ENCODE measurements at regions of chr12 and their contacts with region 1.

Region 1: GRCh38 chr12:7933255-7933729 is 2.7 kb downstream of the SLC2A3 start:
- DNase-seq: peak; percentile 88
- ATAC-seq: peak; percentile 77
- H3K4me3 Mint-ChIP-seq: no peak overlapping the region
- H3K27ac Mint-ChIP-seq: no peak overlapping the region
- H3K4me1 Mint-ChIP-seq: peaks cover 30% of the 10 kb centered on the region
- H3K27me3 Mint-ChIP-seq: no peaks in the 10 kb centered on the region

Region 2: DNA sequence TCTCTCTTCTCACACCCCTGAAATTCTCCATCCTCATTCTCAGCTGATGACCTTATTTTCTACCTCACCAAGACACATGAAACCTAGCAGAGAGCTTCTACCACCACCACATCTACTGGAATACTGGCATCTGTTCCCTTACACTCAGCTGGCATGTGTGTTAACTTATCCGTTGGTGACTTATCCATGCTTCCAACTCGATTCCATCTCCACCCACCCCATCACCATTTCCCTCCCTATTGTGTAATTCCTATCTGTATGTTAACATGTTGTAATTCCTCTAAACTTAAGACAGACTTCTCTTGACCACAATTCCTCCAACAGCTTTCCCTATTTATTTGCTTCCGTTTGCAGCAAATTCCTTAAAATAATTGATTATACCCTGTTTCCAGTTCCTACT is 857.4 kb before region 1 on chr12:
- CTCF ChIA-PET with region 1: no interaction called
- POLR2A ChIA-PET with region 1: no interaction called
- DNase-seq: no peak
- ATAC-seq: no peak
- H3K4me3 Mint-ChIP-seq: no peak overlapping the region
- H3K27ac Mint-ChIP-seq: no peak overlapping the region
- H3K4me1 Mint-ChIP-seq: peaks cover 6% of the 10 kb centered on the region
- H3K27me3 Mint-ChIP-seq: peaks cover 30% of the 10 kb centered on the region

Region 3: DNA sequence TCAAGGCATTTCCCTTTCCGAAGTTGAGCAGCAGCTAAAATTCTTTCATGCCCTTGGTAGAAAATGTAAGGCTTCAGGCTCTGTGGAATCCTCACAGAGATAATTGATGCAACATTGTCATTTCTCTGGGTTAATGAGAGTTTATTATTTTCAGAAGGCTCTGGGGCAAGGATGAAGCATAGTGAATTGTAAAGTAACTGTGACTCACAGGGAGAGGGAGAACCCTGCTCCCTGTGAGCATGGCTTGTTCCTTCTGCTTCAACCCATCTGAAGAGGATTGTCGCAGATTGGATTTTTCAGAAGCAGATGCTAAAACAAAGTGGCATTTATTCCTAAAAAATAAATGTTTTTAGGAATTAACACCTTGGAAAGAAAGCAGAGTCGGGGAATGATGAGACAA is 308.8 kb before region 1 on chr12:
- CTCF ChIA-PET with region 1: no interaction called
- POLR2A ChIA-PET with region 1: no interaction called
- DNase-seq: no peak
- ATAC-seq: no peak
- H3K4me3 Mint-ChIP-seq: no peak overlapping the region
- H3K27ac Mint-ChIP-seq: no peak overlapping the region
- H3K4me1 Mint-ChIP-seq: no peaks in the 10 kb centered on the region
- H3K27me3 Mint-ChIP-seq: peaks cover 4% of the 10 kb centered on the region

Region 4: GRCh38 chr12:7917392-7918267 is 15.7 kb before region 1 on chr12:
- CTCF ChIA-PET with region 1: interaction called, 24 read pairs
- POLR2A ChIA-PET with region 1: interaction called, 7 read pairs
- DNase-seq: no peak
- ATAC-seq: no peak
- H3K4me3 Mint-ChIP-seq: no peak overlapping the region
- H3K27ac Mint-ChIP-seq: no peak overlapping the region
- H3K4me1 Mint-ChIP-seq: peaks cover 37% of the 10 kb centered on the region
- H3K27me3 Mint-ChIP-seq: no peaks in the 10 kb centered on the region

Region 5: DNA sequence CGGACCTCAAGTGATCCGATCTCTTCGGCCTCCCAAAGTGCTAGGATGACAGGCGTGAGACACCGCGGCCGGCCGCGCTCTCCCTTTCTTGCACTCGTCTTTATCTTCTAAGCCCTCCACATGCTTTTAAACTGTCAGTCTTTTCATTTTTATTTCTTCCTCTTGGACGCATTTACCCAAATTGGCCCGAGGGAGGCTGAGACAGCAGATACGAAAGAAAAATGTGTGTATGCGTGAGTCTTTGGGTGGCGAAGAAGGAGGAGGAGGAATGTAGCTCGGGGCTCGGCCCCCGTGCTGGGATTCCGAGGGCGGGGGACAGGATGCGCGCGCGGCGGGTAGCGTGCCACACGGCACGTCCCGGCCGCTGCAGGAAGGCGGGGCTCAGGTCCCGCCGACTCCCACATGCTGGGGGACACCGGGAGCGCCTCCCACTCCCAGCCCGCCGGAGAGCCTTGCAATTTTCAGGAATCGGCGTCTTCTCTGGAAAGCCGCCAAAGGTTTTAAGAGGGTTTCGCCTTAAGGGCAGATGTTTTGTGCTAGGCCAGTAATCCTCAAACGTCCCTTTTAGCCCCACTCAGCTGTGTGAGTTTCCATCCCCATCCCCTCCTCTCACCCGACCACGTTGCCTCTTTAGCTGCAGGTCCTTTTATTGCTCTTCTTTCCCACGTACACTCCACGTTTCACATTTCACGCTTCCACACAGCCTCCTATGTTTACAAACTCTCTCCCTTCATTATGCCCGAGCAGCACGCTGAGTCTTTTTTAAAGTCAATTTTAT is 37.4 kb after region 1 on chr12:
- CTCF ChIA-PET with region 1: interaction called, 55 read pairs
- POLR2A ChIA-PET with region 1: interaction called, 78 read pairs
- DNase-seq: peak; percentile 91
- ATAC-seq: peak; percentile 96
- H3K4me3 Mint-ChIP-seq: peak overlapping the region; percentile 74
- H3K27ac Mint-ChIP-seq: peak overlapping the region; percentile 95
- H3K4me1 Mint-ChIP-seq: peaks cover 42% of the 10 kb centered on the region
- H3K27me3 Mint-ChIP-seq: no peaks in the 10 kb centered on the region

Region 6: DNA sequence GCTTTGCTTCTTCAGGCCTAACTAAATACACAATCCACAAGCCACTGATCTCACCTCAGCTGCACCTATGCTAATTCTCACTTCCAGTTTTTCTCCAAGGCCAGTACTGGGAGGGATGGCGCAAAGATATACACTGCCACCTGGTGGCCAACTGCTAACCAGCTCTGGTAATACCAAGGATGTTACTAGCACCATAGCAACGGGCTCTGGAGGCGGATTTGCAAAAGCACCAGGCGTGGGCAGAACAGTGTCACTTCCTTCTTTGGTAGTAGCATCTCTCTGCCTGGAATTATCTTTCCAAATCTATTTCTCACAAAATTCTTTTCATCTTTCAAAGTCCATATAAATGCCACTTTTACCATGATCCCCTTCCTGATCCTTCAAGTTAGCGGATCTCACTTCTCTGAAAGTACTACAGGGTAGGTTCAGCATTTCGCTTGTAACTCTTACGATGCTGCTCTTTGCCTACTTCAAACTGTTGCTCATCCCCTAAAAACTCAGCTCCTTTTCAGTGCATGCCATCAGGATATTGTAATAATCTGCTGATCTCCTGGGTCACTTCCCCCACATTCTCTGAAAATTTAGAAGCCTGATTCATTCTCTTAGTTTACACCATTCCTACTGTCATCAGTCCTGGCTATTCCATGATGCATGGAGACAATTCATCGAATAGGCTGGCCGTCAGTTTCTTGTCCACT is 62.1 kb after region 1 on chr12:
- CTCF ChIA-PET with region 1: interaction called, 147 read pairs
- POLR2A ChIA-PET with region 1: interaction called, 15 read pairs
- DNase-seq: peak; percentile 89
- ATAC-seq: peak; percentile 100
- H3K4me3 Mint-ChIP-seq: no peak overlapping the region
- H3K27ac Mint-ChIP-seq: no peak overlapping the region
- H3K4me1 Mint-ChIP-seq: peaks cover 15% of the 10 kb centered on the region
- H3K27me3 Mint-ChIP-seq: no peaks in the 10 kb centered on the region

Region 7: GRCh38 chr12:8078398-8078797 is 145.1 kb after region 1 on chr12:
- CTCF ChIA-PET with region 1: interaction called, 25 read pairs
- POLR2A ChIA-PET with region 1: interaction called, 5 read pairs
- DNase-seq: peak; percentile 72
- ATAC-seq: no peak
- H3K4me3 Mint-ChIP-seq: no peak overlapping the region
- H3K27ac Mint-ChIP-seq: no peak overlapping the region
- H3K4me1 Mint-ChIP-seq: peaks cover 31% of the 10 kb centered on the region
- H3K27me3 Mint-ChIP-seq: no peaks in the 10 kb centered on the region

Measured in activated CD8-positive, alpha-beta T cell treated with anti-CD3 and anti-CD28 coated beads, Interleukin-2, amount 10 ng/mL, durations not matched to agents 7 days and 5 days (primary cell).